ENCODE measurements at regions of chr12 and their contacts with region 1.

Region 1: DNA sequence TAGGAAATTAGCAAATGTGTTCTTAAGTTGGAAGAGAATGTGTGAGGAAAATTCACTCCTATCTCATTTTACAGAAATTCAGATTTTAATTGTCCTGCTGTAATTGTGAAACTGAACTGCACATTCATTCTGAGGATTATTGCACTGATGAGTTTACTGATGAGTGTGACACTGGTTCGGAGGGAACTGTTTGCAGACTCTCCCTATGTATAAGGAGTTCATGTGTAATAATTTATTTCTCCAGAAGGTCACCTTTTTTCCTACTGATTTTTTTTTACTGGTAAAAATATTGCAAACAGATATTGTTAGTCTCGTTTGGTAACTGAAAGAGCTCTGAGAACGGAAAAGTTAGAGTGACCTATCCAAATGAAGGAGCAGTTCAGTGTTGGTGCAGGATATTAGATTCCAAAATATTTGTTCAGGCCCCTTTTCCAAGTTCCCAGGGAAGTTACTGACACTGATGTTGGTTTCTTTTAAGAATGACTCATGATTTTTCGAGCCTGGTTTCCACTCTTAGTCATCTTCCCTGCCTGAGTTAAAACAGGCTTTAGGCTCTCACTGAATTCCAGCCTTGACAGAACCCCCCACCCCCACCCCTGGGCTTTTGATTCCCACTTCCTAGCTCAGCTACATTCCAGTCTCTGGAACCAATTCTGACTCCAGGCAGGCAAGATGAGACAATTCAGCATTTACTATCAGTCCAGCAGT is 18.4 kb downstream of the ANO6 start:
- DNase-seq: peak; percentile 71
- H3K4me3 ChIP-seq: no peak overlapping the region
- H3K27ac ChIP-seq: peak overlapping the region; percentile 85 to 89 (median 87)
- H3K4me1 ChIP-seq: peaks cover 0 to 59% (median 56%) of the 10 kb centered on the region in 4 donors
- H3K27me3 ChIP-seq: no peaks in the 10 kb centered on the region
- CTCF ChIP-seq: no peak
- EP300 ChIP-seq: peak; percentile 2 to 83 (median 57)
- POLR2A ChIP-seq: no peak

Region 2: GRCh38 chr12:44976246-44976645 is 258.0 kb before region 1 on chr12:
- intact Hi-C with region 1: no loop called
- DNase-seq: no peak
- H3K4me3 ChIP-seq: no peak overlapping the region
- H3K27ac ChIP-seq: no peak overlapping the region
- H3K4me1 ChIP-seq: no peaks in the 10 kb centered on the region
- H3K27me3 ChIP-seq: no peaks in the 10 kb centered on the region
- CTCF ChIP-seq: no peak
- EP300 ChIP-seq: no peak
- POLR2A ChIP-seq: no peak

Region 3: DNA sequence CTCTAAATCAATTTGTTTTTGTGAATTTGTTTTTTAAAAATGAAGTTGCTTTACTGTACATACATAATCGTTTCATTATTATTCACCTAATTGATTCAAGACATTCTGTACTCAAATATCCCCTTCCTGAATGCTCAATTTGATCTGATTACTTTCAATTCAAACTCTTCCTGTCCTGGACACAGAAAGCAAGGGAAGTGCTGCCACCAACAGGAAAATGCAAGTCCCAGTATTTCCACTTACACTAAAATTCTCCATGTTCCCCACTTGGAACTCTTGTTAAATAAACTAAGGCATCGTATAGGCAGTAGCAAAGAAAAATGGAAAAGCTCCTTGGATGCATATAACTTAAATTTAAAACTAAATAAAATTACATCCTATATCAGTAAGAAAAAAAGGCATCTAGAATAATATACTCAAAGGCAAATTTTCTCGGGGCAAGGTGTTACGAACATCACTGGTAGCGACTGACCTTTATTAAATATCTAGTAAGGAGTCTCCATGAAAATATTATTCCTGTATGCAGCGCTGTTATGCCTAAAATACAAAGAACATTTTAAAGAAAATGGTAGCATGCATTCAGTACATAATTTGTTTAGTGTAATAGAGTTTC is 111.4 kb before region 1 on chr12:
- intact Hi-C with region 1: no loop called
- DNase-seq: no peak
- H3K4me3 ChIP-seq: no peak overlapping the region
- H3K27ac ChIP-seq: no peak overlapping the region
- H3K4me1 ChIP-seq: no peaks in the 10 kb centered on the region
- H3K27me3 ChIP-seq: no peaks in the 10 kb centered on the region
- CTCF ChIP-seq: no peak
- EP300 ChIP-seq: no peak
- POLR2A ChIP-seq: no peak

Region 4: GRCh38 chr12:45290204-45290580 is 55.9 kb after region 1 on chr12:
- intact Hi-C with region 1: loop called (anchors 5 kb)
- DNase-seq: no peak
- H3K4me3 ChIP-seq: no peak overlapping the region
- H3K27ac ChIP-seq: peak overlapping the region; percentile 78 to 87 (median 82)
- H3K4me1 ChIP-seq: peaks cover 0 to 57% (median 41%) of the 10 kb centered on the region in 4 donors
- H3K27me3 ChIP-seq: no peaks in the 10 kb centered on the region
- CTCF ChIP-seq: no peak
- EP300 ChIP-seq: no peak
- POLR2A ChIP-seq: no peak

Region 5: DNA sequence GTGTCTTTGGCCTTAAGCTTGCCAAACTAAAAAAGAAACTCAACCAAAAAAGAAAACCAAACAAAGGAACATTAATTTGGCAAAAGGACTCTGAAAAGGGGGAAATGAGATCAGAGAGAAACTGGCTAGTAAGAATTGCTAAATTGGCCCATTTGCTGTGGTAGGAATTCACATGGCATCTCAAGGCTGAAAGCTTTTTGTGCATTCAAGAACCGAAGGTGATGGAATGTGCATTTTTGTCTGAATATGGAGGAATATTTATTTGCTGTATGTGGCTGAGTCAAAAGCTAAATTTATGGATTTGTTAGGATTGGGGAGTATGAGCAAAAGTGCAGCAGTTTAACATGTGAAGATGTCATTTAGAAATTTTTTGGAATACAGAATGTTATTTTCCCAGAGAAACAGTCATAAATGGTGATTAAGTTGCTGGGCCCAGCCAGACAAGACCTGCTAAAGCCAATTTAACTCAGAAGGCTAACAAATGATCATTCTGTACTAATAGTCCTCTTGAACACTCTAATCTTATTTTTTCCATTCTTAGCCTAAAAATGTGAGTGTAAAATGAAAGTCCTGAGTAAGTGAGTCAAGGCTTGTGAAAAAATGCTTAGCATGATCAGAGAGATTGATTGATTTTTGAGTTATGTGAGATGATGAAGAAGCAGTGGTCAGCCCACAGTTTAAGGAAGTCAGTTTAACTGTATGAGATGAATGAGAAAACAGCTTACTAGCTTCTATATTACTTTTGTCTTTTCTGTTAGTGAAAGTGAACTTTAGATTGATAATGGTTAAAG is 75.7 kb after region 1 on chr12:
- intact Hi-C with region 1: loop called (anchors 5 kb)
- DNase-seq: no peak
- H3K4me3 ChIP-seq: no peak overlapping the region
- H3K27ac ChIP-seq: peak overlapping the region; percentile 10 to 86 (median 56)
- H3K4me1 ChIP-seq: peaks cover 0 to 50% (median 43%) of the 10 kb centered on the region in 4 donors
- H3K27me3 ChIP-seq: no peaks in the 10 kb centered on the region
- CTCF ChIP-seq: no peak
- EP300 ChIP-seq: no peak
- POLR2A ChIP-seq: no peak